ENCODE measurements at regions of chr3 and their contacts with region 1.

Region 1: DNA sequence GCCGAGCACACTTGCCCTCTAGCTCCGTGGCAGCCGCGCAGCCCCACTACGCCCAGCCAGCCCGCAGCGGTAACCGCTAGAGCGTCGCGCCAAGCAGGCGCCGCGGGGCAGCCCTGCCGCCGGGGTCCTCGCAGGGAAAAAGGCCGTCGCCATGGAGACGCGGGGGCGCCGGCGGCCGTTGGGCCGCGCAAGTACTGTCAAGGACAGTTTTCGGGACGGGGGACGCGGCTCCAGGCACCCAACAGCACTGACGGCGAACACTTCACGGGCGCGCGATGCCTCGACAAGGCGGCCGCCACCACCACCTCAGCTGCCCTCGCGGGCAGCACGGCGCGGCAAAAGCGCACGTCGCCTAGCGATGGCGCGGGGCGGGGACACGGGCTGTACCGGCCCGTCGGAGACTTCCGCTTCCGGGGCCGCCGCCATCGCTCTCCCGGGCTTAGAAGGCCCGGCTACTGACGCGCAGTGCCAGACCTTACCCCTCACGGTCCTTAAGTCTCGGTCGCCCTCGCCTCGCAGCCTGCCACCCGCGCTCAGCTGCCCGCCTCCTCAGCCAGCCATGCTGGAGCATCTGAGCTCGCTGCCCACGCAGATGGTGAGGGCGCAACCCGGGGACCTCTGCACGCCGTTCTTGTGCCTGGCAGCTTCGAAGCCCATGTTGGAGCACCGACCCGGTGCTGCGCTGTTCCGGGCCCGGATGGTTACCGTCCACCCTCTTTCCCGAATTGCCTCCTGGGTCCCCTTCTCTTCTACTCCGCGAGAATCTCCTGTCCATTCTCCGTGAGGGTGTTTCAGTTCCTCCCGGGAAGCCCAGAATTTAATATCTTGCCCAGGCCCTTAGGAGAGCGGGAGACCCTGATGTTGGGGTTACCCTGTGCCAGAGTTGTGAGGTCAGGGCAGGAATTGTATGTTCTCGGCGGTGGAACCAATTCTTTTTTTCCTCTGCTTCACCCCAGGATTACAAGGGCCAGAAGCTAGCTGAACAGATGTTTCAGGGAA is at the starts of genes GLT8D1 and SPCS1:
- DNase-seq: peak; percentile 71 to 94 (median 85)
- ATAC-seq: peak; percentile 89
- H3K4me3 ChIP-seq: peak within 1 kb of the TSS; percentile 92
- H3K4me3 Mint-ChIP-seq: peak within 1 kb of the TSS; percentile 94
- H3K27ac ChIP-seq: peak within 1 kb of the TSS; percentile 73 to 90
- H3K27ac Mint-ChIP-seq: peak within 1 kb of the TSS; percentile 96
- H3K4me1 ChIP-seq: peaks cover 33% of the 10 kb centered on the region
- H3K4me1 Mint-ChIP-seq: peaks cover 38% of the 10 kb centered on the region
- H3K27me3 ChIP-seq: no peaks in the 10 kb centered on the region
- H3K27me3 Mint-ChIP-seq: no peaks in the 10 kb centered on the region
- CTCF ChIP-seq: no peak
- total RNA-seq, gene GLT8D1: 9.3 to 11.3 TPM
- total RNA-seq, gene SPCS1: 58.5 to 59.6 TPM

Region 2: DNA sequence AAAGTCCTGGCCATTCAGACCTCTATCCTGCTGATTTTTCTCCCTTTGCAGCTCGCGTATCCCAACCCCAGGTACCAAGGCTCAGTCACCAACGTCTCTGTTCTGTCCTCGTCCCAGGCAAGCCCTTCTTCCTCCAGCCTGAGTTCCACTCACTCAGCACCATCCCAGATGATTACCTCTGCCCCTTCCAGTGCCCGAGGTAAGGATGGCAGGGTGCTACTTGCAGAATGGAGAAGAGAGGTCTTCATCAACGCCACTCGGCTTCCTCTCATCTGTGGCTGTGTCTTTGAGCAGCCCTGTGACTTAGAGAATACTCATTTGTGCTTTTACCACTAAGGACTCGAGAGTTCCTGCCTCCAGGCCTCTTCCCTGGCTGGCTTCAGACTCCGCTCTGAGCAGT is 1343.5 kb before region 1 on chr3:
- CTCF ChIA-PET with region 1: no interaction called
- POLR2A ChIA-PET with region 1: no interaction called
- intact Hi-C with region 1: no loop called
- DNase-seq: no peak
- ATAC-seq: no peak
- H3K4me3 ChIP-seq: no peak overlapping the region
- H3K4me3 Mint-ChIP-seq: no peak overlapping the region
- H3K27ac ChIP-seq: no peak overlapping the region
- H3K27ac Mint-ChIP-seq: no peak overlapping the region
- H3K4me1 ChIP-seq: no peaks in the 10 kb centered on the region
- H3K4me1 Mint-ChIP-seq: no peaks in the 10 kb centered on the region
- H3K27me3 ChIP-seq: no peaks in the 10 kb centered on the region
- H3K27me3 Mint-ChIP-seq: no peaks in the 10 kb centered on the region
- CTCF ChIP-seq: no peak

Region 3: DNA sequence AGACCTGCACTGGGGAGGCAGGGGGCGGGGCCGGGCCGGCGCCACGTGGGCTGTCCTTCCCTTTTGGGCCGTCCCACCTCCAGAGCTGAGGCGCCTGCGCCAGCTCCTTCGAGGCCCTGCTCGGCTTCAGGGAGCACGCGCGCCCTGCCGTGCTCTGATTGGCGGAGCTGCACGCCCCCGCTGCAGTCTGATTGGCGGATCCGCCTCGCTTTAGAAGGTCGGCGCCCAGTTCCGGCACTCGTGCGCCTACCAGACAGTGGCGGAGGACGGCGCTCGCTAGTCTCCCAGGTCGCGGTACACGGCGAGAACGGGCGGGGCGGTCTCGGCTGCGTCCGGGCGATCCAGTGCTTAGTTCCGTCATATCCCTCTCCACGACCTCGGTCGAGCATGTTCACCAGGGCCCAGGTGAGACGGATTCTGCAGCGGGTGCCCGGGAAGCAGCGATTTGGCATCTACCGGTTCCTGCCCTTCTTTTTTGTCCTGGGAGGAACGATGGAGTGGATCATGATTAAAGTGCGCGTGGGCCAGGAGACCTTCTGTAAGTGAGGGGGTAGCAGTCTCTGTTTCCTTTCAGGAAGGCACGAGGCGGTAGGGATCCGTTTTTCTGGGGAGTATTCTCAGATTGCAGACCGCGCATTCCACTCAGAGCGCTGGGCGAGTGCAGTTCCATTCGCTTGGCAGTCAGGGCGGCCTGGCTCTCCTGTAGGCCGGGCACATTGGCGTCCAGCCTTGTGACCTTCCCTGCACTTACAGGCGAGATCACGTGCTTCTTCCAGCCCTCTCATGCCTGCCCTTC is 169.4 kb before region 1 on chr3 and contains the start of gene UQCC5:
- CTCF ChIA-PET with region 1: no interaction called
- POLR2A ChIA-PET with region 1: no interaction called
- intact Hi-C with region 1: loop called (anchors 1 to 2 kb)
- DNase-seq: peak; percentile 92 to 99 (median 95)
- ATAC-seq: peak; percentile 88
- H3K4me3 ChIP-seq: peak within 1 kb of the TSS; percentile 79 to 88
- H3K4me3 Mint-ChIP-seq: peak within 1 kb of the TSS; percentile 99
- H3K27ac ChIP-seq: peak within 1 kb of the TSS; percentile 82 to 83
- H3K27ac Mint-ChIP-seq: peak within 1 kb of the TSS; percentile 98
- H3K4me1 ChIP-seq: peaks cover 41% of the 10 kb centered on the region
- H3K4me1 Mint-ChIP-seq: peaks cover 55% of the 10 kb centered on the region
- H3K27me3 ChIP-seq: peaks cover 0 to 8% of the 10 kb centered on the region in 2 experiments
- H3K27me3 Mint-ChIP-seq: no peaks in the 10 kb centered on the region
- CTCF ChIP-seq: no peak
- total RNA-seq, gene UQCC5: 5.2 to 6.8 TPM

Region 4: GRCh38 chr3:52693071-52693470 is 12.9 kb before region 1 on chr3:
- CTCF ChIA-PET with region 1: interaction called, 4 read pairs
- POLR2A ChIA-PET with region 1: interaction called, 11 read pairs
- intact Hi-C with region 1: no loop called
- DNase-seq: no peak
- ATAC-seq: no peak
- H3K4me3 ChIP-seq: no peak overlapping the region
- H3K4me3 Mint-ChIP-seq: no peak overlapping the region
- H3K27ac ChIP-seq: no peak overlapping the region
- H3K27ac Mint-ChIP-seq: peak overlapping the region; percentile 52
- H3K4me1 ChIP-seq: no peaks in the 10 kb centered on the region
- H3K4me1 Mint-ChIP-seq: peaks cover 18% of the 10 kb centered on the region
- H3K27me3 ChIP-seq: no peaks in the 10 kb centered on the region
- H3K27me3 Mint-ChIP-seq: no peaks in the 10 kb centered on the region
- CTCF ChIP-seq: no peak

Region 5: GRCh38 chr3:52770496-52771333 is 64.7 kb after region 1 on chr3 and contains the start of gene NEK4:
- CTCF ChIA-PET with region 1: no interaction called
- POLR2A ChIA-PET with region 1: interaction called, 4 read pairs
- intact Hi-C with region 1: loop called (anchors 1 to 2 kb)
- DNase-seq: peak; percentile 49 to 92 (median 84)
- ATAC-seq: peak; percentile 89
- H3K4me3 ChIP-seq: peak within 1 kb of the TSS; percentile 60 to 81
- H3K4me3 Mint-ChIP-seq: peak within 1 kb of the TSS; percentile 98
- H3K27ac ChIP-seq: peak within 1 kb of the TSS; percentile 42 to 68
- H3K27ac Mint-ChIP-seq: peak within 1 kb of the TSS; percentile 93
- H3K4me1 ChIP-seq: peaks cover 9% of the 10 kb centered on the region
- H3K4me1 Mint-ChIP-seq: peaks cover 19% of the 10 kb centered on the region
- H3K27me3 ChIP-seq: no peaks in the 10 kb centered on the region
- H3K27me3 Mint-ChIP-seq: no peaks in the 10 kb centered on the region
- CTCF ChIP-seq: no peak
- total RNA-seq, gene NEK4: 5.1 to 5.6 TPM

Region 6: GRCh38 chr3:53045518-53046170 is 339.7 kb after region 1 on chr3 and contains the start of gene SFMBT1:
- CTCF ChIA-PET with region 1: no interaction called
- POLR2A ChIA-PET with region 1: no interaction called
- intact Hi-C with region 1: loop called in 1 of 2 experiments (anchors 5 kb)
- DNase-seq: peak; percentile 52 to 91 (median 78)
- ATAC-seq: peak; percentile 49
- H3K4me3 ChIP-seq: peak within 1 kb of the TSS; percentile 85 to 88
- H3K4me3 Mint-ChIP-seq: peak within 1 kb of the TSS; percentile 98
- H3K27ac ChIP-seq: peak within 1 kb of the TSS; percentile 81 to 83
- H3K27ac Mint-ChIP-seq: peak within 1 kb of the TSS; percentile 99
- H3K4me1 ChIP-seq: peaks cover 37% of the 10 kb centered on the region
- H3K4me1 Mint-ChIP-seq: peaks cover 35% of the 10 kb centered on the region
- H3K27me3 ChIP-seq: no peaks in the 10 kb centered on the region
- H3K27me3 Mint-ChIP-seq: no peaks in the 10 kb centered on the region
- CTCF ChIP-seq: no peak
- total RNA-seq, gene SFMBT1: 23.6 to 26.2 TPM

Measured in CD8-positive, alpha-beta T cell (primary cell).